ENCODE measurements at regions of chr19 and their contacts with region 1.

Region 1: DNA sequence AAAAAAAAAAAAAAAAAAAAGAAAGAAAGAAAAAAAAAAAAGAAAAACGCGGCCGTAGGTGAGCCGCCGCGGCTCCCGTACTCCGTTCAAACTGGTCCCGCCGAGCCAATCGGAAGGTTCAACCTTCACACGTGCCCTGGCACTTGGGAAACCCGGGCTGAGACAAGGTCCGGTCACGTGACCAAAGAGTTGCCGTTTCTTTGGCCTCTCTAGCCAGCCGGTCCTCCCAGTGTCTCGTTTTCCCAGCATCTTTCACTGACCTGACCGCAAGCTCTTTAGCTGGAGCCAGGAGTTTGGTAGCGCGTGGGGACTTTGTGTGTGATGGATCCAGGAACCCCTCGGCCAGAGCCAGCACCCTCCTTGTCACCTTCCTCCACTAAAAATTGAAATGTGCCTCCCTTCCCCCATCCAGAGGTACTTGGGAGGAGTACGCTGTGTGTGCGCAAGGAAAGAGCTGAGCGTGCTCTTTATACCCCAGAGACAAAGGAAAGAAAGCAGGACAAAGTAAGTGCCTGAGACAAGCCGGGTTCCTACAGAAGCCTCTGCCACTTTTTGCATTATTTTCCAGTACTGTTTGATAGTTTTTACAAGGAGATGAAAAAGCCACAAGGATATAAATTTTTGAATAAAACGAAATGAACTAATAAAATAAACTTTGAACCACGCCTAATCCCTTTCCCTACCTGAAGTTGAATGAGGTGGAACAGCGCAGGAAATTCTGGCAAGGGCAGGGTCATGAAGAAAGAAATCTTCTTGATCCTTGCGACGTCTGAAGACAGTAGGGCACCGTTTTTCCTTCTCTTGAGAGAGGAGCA is 959 bp downstream of the TNPO2 start:
- DNase-seq: peak; percentile 97
- ATAC-seq: peak; percentile 87
- H3K4me3 ChIP-seq: peak overlapping the region; percentile 60 to 83 (median 77)
- H3K4me3 Mint-ChIP-seq: peak overlapping the region; percentile 95
- H3K27ac ChIP-seq: peak overlapping the region; percentile 17 to 69
- H3K27ac Mint-ChIP-seq: peak overlapping the region; percentile 97
- H3K4me1 ChIP-seq: peaks cover 29 to 39% of the 10 kb centered on the region in 2 donors
- H3K4me1 Mint-ChIP-seq: peaks cover 39% of the 10 kb centered on the region
- H3K27me3 ChIP-seq: no peaks in the 10 kb centered on the region
- H3K27me3 Mint-ChIP-seq: no peaks in the 10 kb centered on the region
- CTCF ChIP-seq: no peak

Region 2: DNA sequence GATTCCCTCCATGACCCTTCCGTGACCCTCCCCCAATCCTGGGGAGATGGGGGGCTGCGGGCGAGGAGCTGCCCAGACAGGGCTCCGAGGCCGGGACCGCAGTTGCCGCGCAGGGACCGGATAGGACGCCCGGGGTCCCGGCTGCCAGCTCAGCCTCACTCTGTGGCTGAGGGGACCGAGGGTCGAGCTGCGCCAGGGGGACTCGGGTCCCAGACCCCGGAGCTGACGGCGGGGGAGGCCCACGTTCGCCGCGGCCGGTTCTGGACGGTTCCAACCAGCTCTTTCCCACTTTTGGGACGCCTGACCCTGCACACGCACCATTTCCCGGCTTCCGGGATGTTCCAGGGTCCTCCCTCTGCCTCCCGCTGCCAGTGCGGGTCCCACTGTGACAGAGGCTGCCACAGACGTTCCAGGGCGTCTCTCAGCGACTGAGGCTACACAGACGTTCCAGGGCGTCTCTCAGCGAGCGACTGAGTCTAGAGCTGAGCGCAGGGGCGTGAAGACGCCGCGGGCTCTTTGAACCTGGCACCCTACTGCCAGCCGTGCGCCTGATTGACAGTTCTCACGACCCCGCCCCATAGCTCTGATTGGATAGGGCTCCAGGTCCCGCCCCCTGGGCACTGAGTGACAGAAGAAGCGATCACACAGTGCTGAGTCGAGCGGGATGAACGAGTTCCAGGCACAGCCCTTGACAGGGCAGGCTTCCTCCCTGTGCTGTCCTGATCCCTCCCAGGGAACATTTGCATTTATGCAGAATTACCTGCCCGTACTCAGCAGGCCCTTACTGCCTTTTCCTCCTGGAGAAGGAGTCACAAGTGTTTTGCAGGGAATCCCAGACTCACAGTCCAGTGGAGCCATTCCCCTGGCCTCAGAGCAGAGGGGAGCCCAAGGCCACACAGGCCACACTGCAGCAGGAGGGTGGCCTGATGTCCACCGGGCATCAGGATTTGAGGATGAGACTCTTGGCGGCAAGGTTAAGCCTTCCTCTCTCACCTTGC is 389.3 kb before region 1 on chr19 and contains the start of gene ZNF563:
- CTCF ChIA-PET with region 1: no interaction called
- POLR2A ChIA-PET with region 1: no interaction called
- intact Hi-C with region 1: no loop called
- DNase-seq: peak; percentile 95
- ATAC-seq: peak; percentile 92
- H3K4me3 ChIP-seq: peak within 1 kb of the TSS; percentile 53 to 97 (median 83)
- H3K4me3 Mint-ChIP-seq: peak within 1 kb of the TSS; percentile 88
- H3K27ac ChIP-seq: peak within 1 kb of the TSS; percentile 76 to 86
- H3K27ac Mint-ChIP-seq: peak within 1 kb of the TSS; percentile 95
- H3K4me1 ChIP-seq: peaks cover 30 to 35% of the 10 kb centered on the region in 2 donors
- H3K4me1 Mint-ChIP-seq: peaks cover 37% of the 10 kb centered on the region
- H3K27me3 ChIP-seq: no peaks in the 10 kb centered on the region
- H3K27me3 Mint-ChIP-seq: no peaks in the 10 kb centered on the region
- CTCF ChIP-seq: no peak
- total RNA-seq, gene ZNF563: 6.1 and 7.3 TPM in 2 replicates

Region 3: DNA sequence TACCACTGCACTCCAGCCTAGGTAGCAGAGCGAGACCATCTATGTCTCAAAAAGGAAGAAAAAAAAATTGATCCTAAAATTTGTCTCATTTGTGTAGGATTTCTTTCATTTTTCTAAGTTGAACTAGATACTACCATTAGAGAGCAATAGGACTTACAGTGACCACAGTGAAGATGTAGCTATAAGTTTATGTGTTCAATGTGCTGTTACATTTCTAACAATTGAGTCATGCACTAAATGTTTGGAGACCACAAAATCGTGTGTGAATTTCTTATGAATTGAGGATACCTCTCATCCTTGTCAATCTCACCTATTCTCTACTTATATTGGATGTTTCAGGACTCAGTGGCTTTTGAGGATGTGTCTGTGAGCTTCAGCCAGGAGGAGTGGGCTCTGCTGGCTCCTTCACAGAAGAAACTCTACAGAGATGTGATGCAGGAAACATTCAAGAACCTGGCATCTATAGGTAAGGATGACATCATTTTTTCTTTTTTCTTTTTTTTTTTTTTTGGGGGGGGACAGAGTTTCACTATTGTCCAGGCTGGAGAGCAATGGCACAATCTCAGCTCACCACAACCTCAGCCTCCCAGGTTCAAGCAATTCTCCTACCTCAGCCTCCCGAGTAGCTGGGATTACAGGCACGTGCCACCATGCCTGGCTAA is 99.3 kb before region 1 on chr19:
- CTCF ChIA-PET with region 1: no interaction called
- POLR2A ChIA-PET with region 1: no interaction called
- intact Hi-C with region 1: no loop called
- DNase-seq: no peak
- ATAC-seq: no peak
- H3K4me3 ChIP-seq: no peak overlapping the region
- H3K4me3 Mint-ChIP-seq: no peak overlapping the region
- H3K27ac ChIP-seq: peak overlapping the region in 1 of 2 donors; percentile 18
- H3K27ac Mint-ChIP-seq: no peak overlapping the region
- H3K4me1 ChIP-seq: peaks cover 12 to 16% of the 10 kb centered on the region in 2 donors
- H3K4me1 Mint-ChIP-seq: peaks cover 21% of the 10 kb centered on the region
- H3K27me3 ChIP-seq: no peaks in the 10 kb centered on the region
- H3K27me3 Mint-ChIP-seq: no peaks in the 10 kb centered on the region
- CTCF ChIP-seq: no peak

Region 4: DNA sequence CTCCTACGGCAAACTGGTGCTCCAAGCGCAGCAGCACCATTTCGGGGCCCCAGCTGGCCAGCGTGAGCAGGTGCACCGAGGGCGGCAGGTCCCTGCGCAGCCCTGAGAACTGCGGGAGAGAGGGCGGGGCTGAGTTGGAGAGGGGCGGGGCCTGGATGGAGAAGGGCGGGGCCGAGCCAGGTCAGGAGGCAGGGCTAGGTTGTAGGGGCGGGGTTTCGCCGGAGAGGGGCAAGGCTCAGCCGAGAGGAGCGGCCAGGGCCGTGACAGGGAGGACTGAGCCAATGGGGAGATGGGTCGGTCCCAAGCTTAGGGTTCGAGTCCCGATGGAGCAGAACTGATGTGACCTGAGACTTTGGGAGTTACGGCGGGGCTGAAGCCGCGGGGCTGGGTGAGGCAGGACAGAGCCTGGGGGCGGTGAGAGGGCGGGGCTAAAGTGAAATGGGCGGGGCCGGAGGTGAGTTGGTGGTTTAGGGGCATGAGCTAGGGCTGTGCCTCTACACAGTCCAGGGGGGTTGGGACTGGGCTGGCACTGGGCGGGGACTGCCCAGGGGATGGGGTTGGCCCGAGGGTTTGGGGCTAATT is 75.2 kb before region 1 on chr19:
- CTCF ChIA-PET with region 1: no interaction called
- POLR2A ChIA-PET with region 1: no interaction called
- intact Hi-C with region 1: no loop called
- DNase-seq: peak; percentile 61
- ATAC-seq: peak; percentile 71
- H3K4me3 ChIP-seq: no peak overlapping the region
- H3K4me3 Mint-ChIP-seq: peak overlapping the region; percentile 45
- H3K27ac ChIP-seq: peak overlapping the region in 1 of 2 donors; percentile 33
- H3K27ac Mint-ChIP-seq: no peak overlapping the region
- H3K4me1 ChIP-seq: peaks cover 0 to 10% of the 10 kb centered on the region in 2 donors
- H3K4me1 Mint-ChIP-seq: peaks cover 7% of the 10 kb centered on the region
- H3K27me3 ChIP-seq: no peaks in the 10 kb centered on the region
- H3K27me3 Mint-ChIP-seq: no peaks in the 10 kb centered on the region
- CTCF ChIP-seq: no peak

Region 5: DNA sequence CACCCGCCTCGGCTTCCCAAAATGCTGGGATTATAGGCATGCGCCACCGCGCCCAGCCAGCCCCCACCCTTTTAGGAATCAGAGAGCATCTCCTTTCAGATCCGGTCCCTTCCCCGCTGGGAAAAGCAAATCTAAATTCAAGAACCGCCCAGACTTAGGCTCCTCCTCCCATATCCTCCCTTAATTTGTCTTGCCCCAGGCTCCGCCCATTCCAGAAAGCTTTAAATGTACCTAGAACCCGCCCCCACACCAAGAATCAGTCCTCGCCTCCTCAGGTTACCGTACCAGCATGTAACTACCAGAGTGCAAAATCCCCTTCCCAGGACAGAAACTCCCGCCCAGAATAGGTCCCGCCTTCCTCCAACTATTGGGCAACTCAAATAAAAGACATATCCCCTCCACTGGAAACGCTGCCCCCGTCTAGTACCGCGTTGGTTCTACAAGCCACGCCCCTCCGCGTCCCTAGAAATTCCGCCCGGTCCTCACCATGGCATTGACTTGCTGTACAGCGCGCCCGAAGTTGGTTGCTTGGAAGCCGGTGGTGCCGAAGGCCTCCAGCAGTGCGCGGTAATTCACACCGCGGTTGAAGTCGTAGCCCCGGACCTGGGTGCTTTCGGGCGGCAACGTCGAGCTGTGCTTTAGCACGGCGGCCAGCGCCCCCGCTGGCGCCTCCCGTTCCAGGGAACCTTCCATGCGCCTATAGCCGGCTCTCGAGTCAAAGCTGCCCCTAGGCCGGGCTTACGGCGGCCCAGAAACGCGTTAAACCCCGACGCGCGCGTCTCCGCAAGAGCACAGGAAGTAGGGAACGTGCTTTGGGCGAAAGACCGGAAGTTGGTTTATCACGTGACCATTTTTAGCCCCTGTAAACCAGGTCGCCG is 41.5 kb before region 1 on chr19 and contains the start of gene DHPS:
- CTCF ChIA-PET with region 1: interaction called, 8 read pairs
- POLR2A ChIA-PET with region 1: interaction called, 16 read pairs
- intact Hi-C with region 1: loop called (anchors 1 kb)
- DNase-seq: peak; percentile 98
- ATAC-seq: peak; percentile 75
- H3K4me3 ChIP-seq: peak within 1 kb of the TSS; percentile 73 to 90 (median 86)
- H3K4me3 Mint-ChIP-seq: peak within 1 kb of the TSS; percentile 93
- H3K27ac ChIP-seq: peak within 1 kb of the TSS; percentile 89 to 95
- H3K27ac Mint-ChIP-seq: peak within 1 kb of the TSS; percentile 94
- H3K4me1 ChIP-seq: peaks cover 9 to 17% of the 10 kb centered on the region in 2 donors
- H3K4me1 Mint-ChIP-seq: peaks cover 24% of the 10 kb centered on the region
- H3K27me3 ChIP-seq: no peaks in the 10 kb centered on the region
- H3K27me3 Mint-ChIP-seq: no peaks in the 10 kb centered on the region
- CTCF ChIP-seq: no peak
- total RNA-seq, gene DHPS: 187 and 200 TPM in 2 replicates

Region 6: GRCh38 chr19:12757544-12758274 is 34.9 kb after region 1 on chr19:
- CTCF ChIA-PET with region 1: interaction called, 45 read pairs
- POLR2A ChIA-PET with region 1: no interaction called
- intact Hi-C with region 1: loop called (anchors 1 kb)
- DNase-seq: peak; percentile 75
- ATAC-seq: peak; percentile 72
- H3K4me3 ChIP-seq: peak overlapping the region in 3 of 5 experiments; percentile 27 to 42 (median 37)
- H3K4me3 Mint-ChIP-seq: peak overlapping the region; percentile 52
- H3K27ac ChIP-seq: no peak overlapping the region
- H3K27ac Mint-ChIP-seq: no peak overlapping the region
- H3K4me1 ChIP-seq: peaks cover 7 to 8% of the 10 kb centered on the region in 2 donors
- H3K4me1 Mint-ChIP-seq: peaks cover 11% of the 10 kb centered on the region
- H3K27me3 ChIP-seq: peaks cover 0 to 28% (median 5%) of the 10 kb centered on the region in 4 experiments
- H3K27me3 Mint-ChIP-seq: peaks cover 23% of the 10 kb centered on the region
- CTCF ChIP-seq: peak; percentile 88

Region 7: GRCh38 chr19:12777217-12778016 is 54.6 kb after region 1 on chr19:
- CTCF ChIA-PET with region 1: interaction called, 6 read pairs
- POLR2A ChIA-PET with region 1: interaction called, 5 read pairs
- intact Hi-C with region 1: loop called (anchors 2 kb)
- DNase-seq: peak; percentile 90
- ATAC-seq: peak; percentile 29
- H3K4me3 ChIP-seq: peak overlapping the region; percentile 63 to 89 (median 75)
- H3K4me3 Mint-ChIP-seq: peak overlapping the region; percentile 88
- H3K27ac ChIP-seq: peak overlapping the region; percentile 83 to 86
- H3K27ac Mint-ChIP-seq: peak overlapping the region; percentile 84
- H3K4me1 ChIP-seq: peaks cover 27 to 47% of the 10 kb centered on the region in 2 donors
- H3K4me1 Mint-ChIP-seq: peaks cover 48% of the 10 kb centered on the region
- H3K27me3 ChIP-seq: no peaks in the 10 kb centered on the region
- H3K27me3 Mint-ChIP-seq: no peaks in the 10 kb centered on the region
- CTCF ChIP-seq: peak; percentile 99

Region 8: GRCh38 chr19:12806239-12807081 is 83.7 kb after region 1 on chr19 and contains the start of gene RNASEH2A:
- CTCF ChIA-PET with region 1: no interaction called
- POLR2A ChIA-PET with region 1: no interaction called
- intact Hi-C with region 1: loop called (anchors 5 kb)
- DNase-seq: peak; percentile 93
- ATAC-seq: peak; percentile 95
- H3K4me3 ChIP-seq: peak within 1 kb of the TSS; percentile 51 to 82 (median 73)
- H3K4me3 Mint-ChIP-seq: peak within 1 kb of the TSS; percentile 96
- H3K27ac ChIP-seq: peak within 1 kb of the TSS; percentile 36 to 61
- H3K27ac Mint-ChIP-seq: peak within 1 kb of the TSS; percentile 87
- H3K4me1 ChIP-seq: peaks cover 14 to 23% of the 10 kb centered on the region in 2 donors
- H3K4me1 Mint-ChIP-seq: peaks cover 25% of the 10 kb centered on the region
- H3K27me3 ChIP-seq: no peaks in the 10 kb centered on the region
- H3K27me3 Mint-ChIP-seq: peaks cover 3% of the 10 kb centered on the region
- CTCF ChIP-seq: no peak
- total RNA-seq, gene RNASEH2A: 16.9 and 18.9 TPM in 2 replicates

Region 9: DNA sequence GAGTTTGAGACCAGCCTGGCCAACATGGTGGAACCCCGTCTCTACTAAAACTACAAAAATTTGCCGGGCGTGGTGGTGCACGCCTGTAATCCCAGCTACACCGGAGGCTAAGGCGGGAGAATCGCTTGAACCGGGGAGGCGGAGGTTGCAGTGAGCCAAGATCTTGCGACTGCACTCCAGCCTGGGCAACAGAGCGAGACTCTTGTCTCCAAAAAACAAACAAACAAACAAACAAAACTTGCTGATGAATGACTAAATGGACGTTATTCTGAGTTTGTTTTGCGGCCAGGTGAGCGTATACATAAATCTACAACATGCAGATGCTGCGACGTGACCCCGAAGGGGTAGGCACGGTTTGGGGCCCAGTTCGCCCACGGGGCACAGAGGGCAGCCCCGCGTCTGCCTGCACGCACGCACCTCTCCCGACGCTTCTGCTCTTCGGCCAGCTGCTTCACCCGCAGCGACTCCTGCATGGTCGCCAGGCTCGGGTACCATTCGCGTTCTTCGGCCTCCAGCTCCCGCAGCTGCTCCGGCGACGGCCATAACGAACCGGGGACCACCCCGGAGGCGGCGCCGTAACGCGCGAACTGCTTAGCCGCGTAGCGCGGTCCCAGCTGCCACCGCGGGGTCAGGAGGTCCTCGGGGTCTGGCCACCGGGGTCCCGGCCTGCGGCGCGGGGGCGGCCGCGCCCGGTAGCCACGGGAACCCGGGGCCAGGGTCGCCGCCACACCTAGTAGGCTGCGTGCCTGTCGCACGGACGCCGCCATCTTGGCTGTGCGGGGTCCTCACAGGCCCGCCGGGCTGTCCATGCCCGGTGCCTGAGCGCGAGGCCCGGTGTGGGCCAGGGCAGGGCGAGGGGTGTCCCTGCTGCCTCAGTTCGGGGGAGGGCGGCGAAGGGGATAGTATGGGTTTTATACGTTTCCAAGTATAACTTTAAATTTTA is 233.9 kb after region 1 on chr19 and contains the start of gene GADD45GIP1:
- CTCF ChIA-PET with region 1: no interaction called
- POLR2A ChIA-PET with region 1: no interaction called
- intact Hi-C with region 1: no loop called
- DNase-seq: peak; percentile 86
- ATAC-seq: peak; percentile 98
- H3K4me3 ChIP-seq: peak within 1 kb of the TSS; percentile 60 to 83 (median 65)
- H3K4me3 Mint-ChIP-seq: peak within 1 kb of the TSS; percentile 91
- H3K27ac ChIP-seq: peak within 1 kb of the TSS; percentile 75 to 90
- H3K27ac Mint-ChIP-seq: peak within 1 kb of the TSS; percentile 95
- H3K4me1 ChIP-seq: peaks cover 21 to 36% of the 10 kb centered on the region in 2 donors
- H3K4me1 Mint-ChIP-seq: peaks cover 30% of the 10 kb centered on the region
- H3K27me3 ChIP-seq: no peaks in the 10 kb centered on the region
- H3K27me3 Mint-ChIP-seq: peaks cover 2% of the 10 kb centered on the region
- CTCF ChIP-seq: no peak
- total RNA-seq, gene GADD45GIP1: 11.7 and 12.6 TPM in 2 replicates

Measured in B cell (primary cell).